ENCODE measurements at regions of chr7 and their contacts with region 1.

Region 1: DNA sequence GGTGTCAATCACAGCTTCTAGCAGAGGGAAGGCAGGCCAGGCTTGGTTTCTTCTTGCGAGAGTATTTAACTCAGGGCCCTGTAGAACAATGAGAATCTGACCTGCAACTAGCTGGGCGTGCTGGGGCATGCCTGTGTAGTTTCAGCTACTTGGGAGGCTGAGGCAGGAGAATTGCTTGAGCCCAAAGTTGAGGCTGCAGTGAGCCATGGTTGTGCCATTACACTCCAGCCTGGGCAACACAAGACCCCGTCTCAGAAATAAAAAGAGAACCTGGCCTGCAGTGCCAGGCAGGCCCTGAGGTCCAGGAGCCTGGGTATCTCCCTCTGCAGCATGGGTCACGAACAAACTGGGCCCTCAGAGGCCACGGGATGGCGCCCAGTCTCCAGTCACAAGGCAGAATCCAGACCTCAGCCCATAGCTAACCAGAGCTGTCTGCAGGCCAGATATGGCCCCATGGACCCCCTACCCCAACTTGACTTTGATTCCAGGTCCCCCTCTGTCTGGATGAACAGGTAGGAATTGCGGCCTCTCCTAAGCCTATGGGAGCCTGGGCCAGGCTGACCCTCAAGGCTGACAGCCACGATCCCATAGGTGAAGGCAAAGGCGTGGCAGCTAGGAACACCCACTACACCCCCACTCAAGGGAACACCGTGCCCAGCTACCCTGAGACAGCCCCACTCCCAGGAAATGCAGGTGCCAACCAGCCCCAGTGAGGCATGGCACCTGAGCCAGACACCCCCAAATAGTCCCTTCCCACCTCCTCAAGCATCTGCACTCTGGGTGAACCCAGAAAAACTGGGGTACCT is 102.7 kb upstream of the TNRC18 start:
- DNase-seq: peak; percentile 33
- ATAC-seq: no peak
- H3K4me3 Mint-ChIP-seq: peak overlapping the region; percentile 95
- H3K27ac Mint-ChIP-seq: peak overlapping the region; percentile 80
- H3K4me1 Mint-ChIP-seq: peaks cover 46% of the 10 kb centered on the region
- H3K27me3 Mint-ChIP-seq: no peaks in the 10 kb centered on the region
- CTCF ChIP-seq: no peak

Region 2: GRCh38 chr7:5255832-5256231 is 270.5 kb before region 1 on chr7:
- CTCF ChIA-PET with region 1: no interaction called
- POLR2A ChIA-PET with region 1: no interaction called
- intact Hi-C with region 1: no loop called
- DNase-seq: no peak
- ATAC-seq: no peak
- H3K4me3 Mint-ChIP-seq: no peak overlapping the region
- H3K27ac Mint-ChIP-seq: no peak overlapping the region
- H3K4me1 Mint-ChIP-seq: no peaks in the 10 kb centered on the region
- H3K27me3 Mint-ChIP-seq: peaks cover 6% of the 10 kb centered on the region
- CTCF ChIP-seq: no peak

Region 3: DNA sequence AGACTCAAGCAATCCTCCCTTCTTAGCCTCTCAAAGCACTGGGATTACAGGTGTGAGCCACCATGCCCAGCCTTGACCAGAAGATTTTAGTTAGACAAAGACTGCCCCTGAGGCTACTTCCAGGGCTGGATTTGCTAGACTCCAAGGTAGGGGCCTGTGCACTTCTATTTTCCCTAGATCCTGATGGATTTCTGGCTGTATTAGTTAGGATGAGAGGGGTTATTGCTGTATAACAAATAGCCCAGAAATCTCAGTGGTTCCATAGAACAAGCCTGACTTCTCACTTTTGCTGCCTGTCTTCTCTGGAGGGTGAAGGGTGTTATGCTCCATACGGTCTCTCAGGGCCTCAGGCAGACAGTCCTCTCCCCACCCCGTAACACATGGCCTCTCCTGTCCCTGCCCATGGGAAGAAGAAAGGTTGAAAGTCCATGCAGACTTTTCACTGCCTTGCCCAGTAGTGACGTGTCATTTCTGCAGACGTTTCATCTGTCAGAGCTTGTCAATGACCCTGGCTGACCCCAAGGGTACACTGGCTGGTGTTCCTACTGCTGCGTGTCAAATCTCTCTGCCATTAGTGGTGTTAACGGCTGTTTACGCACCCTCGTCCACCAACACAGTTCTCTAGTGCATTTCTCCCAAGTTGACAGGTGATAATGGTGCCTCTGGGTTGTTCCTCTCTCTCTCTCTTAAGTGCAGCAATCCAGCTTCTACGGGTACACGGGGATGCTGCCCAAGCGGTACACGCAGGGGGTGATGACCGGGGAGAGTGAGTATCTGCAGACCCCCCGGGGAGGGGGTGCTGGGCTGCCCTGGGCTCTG is 231.9 kb before region 1 on chr7:
- CTCF ChIA-PET with region 1: no interaction called
- POLR2A ChIA-PET with region 1: no interaction called
- intact Hi-C with region 1: no loop called
- DNase-seq: no peak
- ATAC-seq: no peak
- H3K4me3 Mint-ChIP-seq: no peak overlapping the region
- H3K27ac Mint-ChIP-seq: no peak overlapping the region
- H3K4me1 Mint-ChIP-seq: peaks cover 12% of the 10 kb centered on the region
- H3K27me3 Mint-ChIP-seq: peaks cover 19% of the 10 kb centered on the region
- CTCF ChIP-seq: no peak

Region 4: DNA sequence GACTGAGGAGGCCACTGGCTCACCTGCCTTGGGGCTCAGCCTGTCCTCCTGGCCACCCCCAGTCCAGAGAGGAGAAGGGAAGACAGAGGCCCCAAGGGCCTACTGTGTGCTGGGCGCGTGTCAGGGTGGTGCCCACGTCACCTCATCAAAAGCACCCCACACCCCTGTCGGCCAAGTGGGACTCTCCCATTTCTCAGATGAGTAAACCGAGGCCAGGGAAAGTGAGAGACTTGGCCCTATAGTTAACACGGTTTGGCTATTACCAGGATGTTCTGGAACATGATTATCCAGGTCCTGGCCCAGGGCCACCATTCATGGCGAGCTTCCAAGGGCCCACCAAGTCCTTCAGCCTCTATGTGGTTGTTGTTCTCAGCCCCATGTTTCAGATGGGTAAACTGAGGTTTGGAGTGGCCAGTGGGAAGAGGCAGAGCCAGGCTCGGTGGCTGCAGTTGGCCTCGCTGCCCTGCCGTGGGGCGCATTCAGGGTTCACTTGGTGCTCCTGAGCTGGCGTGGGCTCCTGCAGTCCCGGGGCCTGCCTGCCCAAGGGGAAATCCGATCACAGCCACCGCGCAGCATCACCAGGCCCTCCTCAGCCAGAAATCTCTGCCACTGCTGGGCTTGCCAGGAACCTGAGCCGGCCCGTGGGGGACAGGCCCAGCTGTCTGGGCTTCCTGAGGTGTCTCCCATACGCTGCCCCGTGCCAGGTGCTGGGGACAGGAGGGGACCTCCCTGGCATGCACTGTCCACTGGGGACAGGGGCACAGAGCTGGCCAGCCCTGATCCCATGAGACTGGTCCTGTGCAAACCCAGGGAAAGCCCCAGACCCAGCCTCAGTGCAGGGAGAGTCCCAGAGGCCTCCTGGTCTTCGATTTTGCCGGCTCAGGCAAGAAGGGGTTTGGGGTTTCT is 15.0 kb after region 1 on chr7:
- CTCF ChIA-PET with region 1: interaction called, 4 read pairs
- POLR2A ChIA-PET with region 1: interaction called, 66 read pairs
- intact Hi-C with region 1: no loop called
- DNase-seq: peak; percentile 50
- ATAC-seq: peak; percentile 73
- H3K4me3 Mint-ChIP-seq: peak overlapping the region; percentile 68
- H3K27ac Mint-ChIP-seq: peak overlapping the region; percentile 86
- H3K4me1 Mint-ChIP-seq: peaks cover 30% of the 10 kb centered on the region
- H3K27me3 Mint-ChIP-seq: no peaks in the 10 kb centered on the region
- CTCF ChIP-seq: no peak

Measured in activated B cell treated with CpG ODN at 0.5 μM for 24 hours (primary cell).